Endothelial cell of umbilical vein (primary cell): ENCODE measurements at regions of chr17 and their contacts with region 1.

Region 1: DNA sequence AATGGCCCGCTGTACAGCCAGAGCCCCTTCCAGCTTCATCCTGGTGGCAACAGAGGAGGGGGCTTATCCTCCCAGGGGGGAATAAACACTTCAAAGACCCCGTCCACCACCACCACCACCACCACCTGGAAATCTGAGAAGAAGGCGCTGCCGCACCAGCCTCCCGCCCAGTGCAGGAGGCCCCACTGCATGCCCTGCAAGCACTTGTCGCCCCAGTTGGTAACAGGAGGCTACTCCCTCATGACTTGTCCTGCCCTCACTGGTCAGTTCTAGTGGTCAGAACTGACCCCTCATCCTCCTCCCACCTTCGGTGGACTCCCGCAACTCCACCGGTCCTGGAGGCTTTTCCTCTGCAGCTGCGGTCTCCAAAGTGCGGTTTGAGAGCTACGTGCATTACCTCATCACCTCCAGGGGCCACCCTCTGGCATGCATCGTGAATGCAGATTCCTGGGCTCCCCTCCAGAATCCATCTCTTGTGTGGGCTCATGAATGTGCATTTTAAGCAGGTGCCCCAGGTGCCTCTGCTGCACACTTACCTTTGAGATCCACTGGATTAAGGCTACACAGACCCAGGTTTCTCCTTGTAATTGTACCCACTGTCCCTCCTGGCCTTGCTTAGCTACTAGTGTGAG is 71.8 kb downstream of the SRCIN1 start:
- DNase-seq: no peak
- H3K4me3 ChIP-seq: no peak overlapping the region
- H3K27ac ChIP-seq: no peak overlapping the region
- H3K4me1 ChIP-seq: no peaks in the 10 kb centered on the region
- H3K27me3 ChIP-seq: peaks cover 0 to 3% of the 10 kb centered on the region in 2 experiments
- CTCF ChIP-seq: no peak
- POLR2A ChIP-seq: no peak

Region 2: GRCh38 chr17:38544839-38545209 is 10.8 kb after region 1 on chr17:
- CTCF ChIA-PET with region 1: interaction called, 19 read pairs
- POLR2A ChIA-PET with region 1: no interaction called
- dilution Hi-C with region 1: no loop called
- intact Hi-C with region 1: no loop called
- DNase-seq: no peak
- H3K4me3 ChIP-seq: no peak overlapping the region
- H3K27ac ChIP-seq: no peak overlapping the region
- H3K4me1 ChIP-seq: no peaks in the 10 kb centered on the region
- H3K27me3 ChIP-seq: no peaks in the 10 kb centered on the region
- CTCF ChIP-seq: no peak
- POLR2A ChIP-seq: no peak